Caco-2 (cell line): ENCODE measurements at regions of chr1 and their contacts with region 1.

Region 1: GRCh38 chr1:169485544-169486278 is at the start of gene SLC19A2:
- DNase-seq: peak; percentile 98 to 99
- H3K4me3 ChIP-seq: peak within 1 kb of the TSS; percentile 85
- H3K4me3 Mint-ChIP-seq: peak within 1 kb of the TSS; percentile 89
- H3K27ac Mint-ChIP-seq: peak within 1 kb of the TSS; percentile 94
- H3K4me1 ChIP-seq: peaks cover 39% of the 10 kb centered on the region
- H3K4me1 Mint-ChIP-seq: peaks cover 33% of the 10 kb centered on the region
- H3K27me3 ChIP-seq: no peaks in the 10 kb centered on the region
- H3K27me3 Mint-ChIP-seq: no peaks in the 10 kb centered on the region
- CTCF ChIP-seq: peak in 1 of 2 experiments; percentile 64
- total RNA-seq, gene SLC19A2: 28.7 and 31.5 TPM in 2 replicates

Region 2: DNA sequence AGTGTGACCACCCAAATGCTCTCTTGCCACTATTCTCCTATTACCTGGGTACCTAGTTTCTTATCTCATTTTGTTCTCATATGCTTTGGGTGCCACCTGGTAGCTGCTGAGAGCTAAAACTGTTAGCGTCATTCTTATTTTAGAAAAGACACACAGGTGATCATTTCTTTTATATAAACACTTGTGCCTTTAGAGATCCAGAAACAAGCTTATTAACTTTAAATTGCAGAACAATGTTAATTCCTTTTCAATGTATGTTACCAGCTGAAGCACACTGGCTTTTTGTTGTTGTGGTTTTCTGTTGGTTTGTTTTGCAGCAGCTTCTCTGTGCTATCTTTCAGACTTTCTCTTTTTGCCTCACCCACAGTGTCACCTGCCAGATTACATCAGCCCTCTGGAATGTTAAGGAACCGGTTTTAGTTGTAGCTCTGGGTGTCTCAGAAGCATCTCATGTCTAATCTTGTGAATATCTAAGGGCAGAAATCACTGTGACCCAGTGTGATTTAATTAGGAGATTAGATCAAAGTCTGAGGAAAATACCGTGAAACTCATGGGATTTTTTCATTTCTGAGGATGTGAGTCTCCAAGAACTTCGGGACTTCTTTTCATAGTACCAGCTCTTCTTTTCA is 43.5 kb after region 1 on chr1:
- CTCF ChIA-PET with region 1: interaction called, 4 read pairs
- POLR2A ChIA-PET with region 1: interaction called, 14 read pairs
- intact Hi-C with region 1: loop called (anchors 1 kb)
- DNase-seq: peak; percentile 88 to 91
- H3K4me3 ChIP-seq: no peak overlapping the region
- H3K4me3 Mint-ChIP-seq: peak overlapping the region; percentile 57
- H3K27ac Mint-ChIP-seq: peak overlapping the region; percentile 98
- H3K4me1 ChIP-seq: peaks cover 65% of the 10 kb centered on the region
- H3K4me1 Mint-ChIP-seq: peaks cover 56% of the 10 kb centered on the region
- H3K27me3 ChIP-seq: no peaks in the 10 kb centered on the region
- H3K27me3 Mint-ChIP-seq: no peaks in the 10 kb centered on the region
- CTCF ChIP-seq: no peak